Head of caudate nucleus (tissue), 42 donors: ENCODE measurements at regions of chr19 and their contacts with region 1.

Region 1: GRCh38 chr19:7522072-7522922 is at the start of gene MCOLN1:
- DNase-seq: peak; percentile 95 to 100 (median 99)

Region 2: DNA sequence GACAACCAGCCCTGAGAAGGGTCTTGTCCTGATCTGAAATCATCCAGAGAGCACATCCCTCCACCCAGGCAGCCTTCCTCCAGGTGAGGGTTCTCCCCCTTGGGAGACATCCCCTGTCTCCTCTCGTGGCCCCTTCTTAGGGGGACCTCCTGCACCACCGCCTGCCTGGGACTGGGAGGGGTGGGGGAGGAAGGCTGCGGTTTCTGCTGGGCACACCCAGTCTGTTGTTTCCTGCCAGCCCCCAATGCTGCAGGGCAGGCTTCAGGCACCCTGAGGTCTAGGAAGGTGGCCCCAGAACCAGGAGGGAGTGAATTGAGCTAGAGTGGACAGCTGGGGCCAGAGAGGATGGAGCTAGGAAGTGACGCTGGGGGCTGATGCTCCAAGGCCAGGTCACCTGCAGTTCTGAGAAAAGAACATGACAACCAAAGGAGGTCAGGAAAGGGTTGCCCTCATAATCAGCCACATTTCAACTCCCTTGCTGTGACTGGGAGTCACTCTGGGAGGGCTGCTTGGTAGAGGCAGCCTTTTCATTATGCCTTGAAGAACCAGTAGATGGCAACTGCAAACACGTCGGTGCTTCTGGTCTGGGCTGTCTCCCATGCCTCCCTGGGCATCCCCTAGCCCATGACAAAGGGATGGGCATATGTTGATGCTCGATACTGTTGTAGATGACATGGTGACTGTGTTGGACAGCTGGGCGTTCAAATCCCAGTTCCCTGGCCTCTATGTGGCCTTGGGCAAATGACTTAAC is 172.2 kb before region 1 on chr19:
- intact Hi-C with region 1: loop called (anchors 10 kb)
- DNase-seq: peak in 1 of 42 donors; percentile 16

Region 3: GRCh38 chr19:7394731-7395359 is 127.5 kb before region 1 on chr19:
- intact Hi-C with region 1: loop called (anchors 10 kb)
- DNase-seq: peak; percentile 67 to 98 (median 94)

Region 4: DNA sequence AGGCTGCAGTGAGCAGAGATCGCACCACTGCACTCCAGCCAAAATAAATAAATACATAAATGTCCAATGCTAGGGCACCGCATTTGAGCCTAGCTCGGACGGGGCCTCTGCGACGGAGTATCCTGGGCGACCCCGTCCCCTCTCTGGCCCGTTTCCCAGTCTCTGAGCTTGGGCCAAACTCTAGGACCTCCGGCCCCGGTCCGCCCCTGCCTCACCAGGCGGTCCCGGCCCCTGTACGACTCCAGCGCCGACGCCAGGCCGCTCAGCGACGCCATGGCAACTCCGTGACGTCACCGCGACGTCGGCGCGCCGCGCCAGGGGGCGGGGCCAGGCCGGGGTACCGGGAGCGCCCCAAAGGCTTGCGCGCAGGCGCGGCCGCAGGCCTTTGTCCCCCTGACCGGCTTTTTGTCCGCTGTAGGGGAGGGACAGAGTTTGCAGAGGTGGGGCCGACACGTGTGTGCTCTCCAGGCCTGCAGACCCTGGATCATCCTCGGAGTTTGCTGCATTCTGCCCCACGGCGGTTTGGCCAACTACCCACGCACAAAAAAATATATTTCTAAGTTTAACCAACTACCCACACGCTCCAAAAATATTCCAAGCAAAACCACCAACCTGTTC is 33.5 kb before region 1 on chr19 and contains the start of gene PEX11G:
- intact Hi-C with region 1: loop called (anchors 5 kb)
- DNase-seq: peak; percentile 82 to 97 (median 93)

Region 5: DNA sequence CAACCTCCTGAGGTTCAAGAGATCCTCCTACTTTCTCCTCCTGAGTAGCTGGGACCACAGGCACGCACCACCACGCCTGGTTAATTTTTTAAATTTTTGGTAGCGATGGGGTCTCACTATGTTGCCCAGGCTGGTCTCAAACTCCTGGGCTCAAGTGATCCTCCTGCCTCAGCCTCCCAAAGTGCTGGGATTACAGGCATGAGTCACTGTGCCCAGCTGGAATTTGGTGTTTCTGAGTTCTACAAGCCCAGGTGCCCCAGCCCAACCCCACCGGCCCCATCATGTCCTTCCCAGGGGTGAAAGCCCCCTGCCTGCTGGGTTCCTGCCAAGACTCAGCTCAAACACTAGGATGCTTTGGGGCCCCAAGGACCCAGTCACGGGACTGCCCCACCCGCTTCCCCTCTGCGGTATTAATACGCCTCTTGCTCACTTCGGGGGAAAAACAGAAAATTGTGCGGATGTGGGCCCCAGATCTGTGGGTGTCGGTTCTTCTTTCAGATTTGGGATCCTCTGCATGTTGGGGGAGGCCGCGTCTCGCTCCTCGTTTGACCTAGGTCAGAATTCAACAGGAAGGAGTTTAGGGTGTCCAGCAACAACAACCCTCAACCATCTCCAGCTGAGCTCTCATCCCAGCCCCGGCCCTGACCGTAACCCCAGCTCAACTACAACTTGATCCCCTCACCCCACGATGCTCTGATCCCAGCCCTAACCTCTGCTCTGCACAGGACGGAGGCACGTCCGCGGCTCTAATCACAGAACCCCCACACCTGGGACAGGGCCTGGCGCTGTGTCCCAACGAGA is 183.3 kb after region 1 on chr19:
- intact Hi-C with region 1: no loop called
- DNase-seq: peak in 14 of 42 donors; percentile 2 to 44 (median 12)